ENCODE measurements at regions of chr14 and their contacts with region 1.

Region 1: DNA sequence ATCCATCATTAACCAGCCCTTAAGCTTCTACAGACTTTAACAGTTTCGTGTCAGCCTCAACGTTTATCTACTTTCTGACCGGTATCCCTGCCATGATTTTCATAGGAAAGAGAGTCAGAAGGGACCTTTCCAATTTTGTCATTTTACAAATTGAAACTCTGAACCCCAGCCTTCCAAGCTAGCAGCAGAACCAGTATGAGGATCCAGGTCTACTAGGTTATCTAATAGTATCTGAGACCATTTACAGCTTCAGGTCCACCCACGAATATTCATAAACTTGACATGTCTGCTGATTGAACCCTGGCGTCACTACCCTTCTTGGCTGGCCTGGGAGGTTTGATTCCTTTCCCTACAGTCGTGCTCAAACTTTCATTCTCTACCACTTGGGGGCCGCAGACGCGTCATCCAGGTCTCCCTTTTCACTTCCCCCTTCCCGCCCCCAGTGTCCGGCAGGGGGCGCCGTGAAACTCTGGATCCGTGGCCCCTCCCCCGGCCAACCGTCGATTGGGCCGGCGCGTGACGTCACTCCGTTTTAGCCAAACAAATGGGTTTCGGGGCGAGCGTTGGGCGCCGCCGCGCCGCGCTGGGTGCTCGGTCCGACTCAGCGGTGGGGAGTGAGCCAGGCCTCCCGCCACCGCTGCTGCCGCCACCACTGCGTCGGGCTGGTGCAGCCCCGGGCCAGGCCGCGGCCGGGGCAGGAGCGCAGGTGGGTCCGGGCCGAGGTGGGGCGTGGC is at the start of gene FBXO34:
- DNase-seq: peak; percentile 98
- ATAC-seq: peak; percentile 86
- H3K4me3 Mint-ChIP-seq: peak within 1 kb of the TSS; percentile 90
- H3K27ac Mint-ChIP-seq: peak within 1 kb of the TSS; percentile 94
- H3K4me1 Mint-ChIP-seq: peaks cover 37% of the 10 kb centered on the region
- H3K27me3 Mint-ChIP-seq: no peaks in the 10 kb centered on the region
- total RNA-seq, gene FBXO34: 18.6 to 22.1 TPM

Region 2: GRCh38 chr14:55238019-55238680 is 32.8 kb before region 1 on chr14:
- CTCF ChIA-PET with region 1: no interaction called
- DNase-seq: no peak
- ATAC-seq: no peak
- H3K4me3 Mint-ChIP-seq: no peak overlapping the region
- H3K27ac Mint-ChIP-seq: no peak overlapping the region
- H3K4me1 Mint-ChIP-seq: peaks cover 5% of the 10 kb centered on the region
- H3K27me3 Mint-ChIP-seq: peaks cover 52% of the 10 kb centered on the region

Region 3: GRCh38 chr14:55254581-55254980 is 16.4 kb before region 1 on chr14:
- CTCF ChIA-PET with region 1: interaction called, 10 read pairs
- DNase-seq: no peak
- ATAC-seq: no peak
- H3K4me3 Mint-ChIP-seq: no peak overlapping the region
- H3K27ac Mint-ChIP-seq: no peak overlapping the region
- H3K4me1 Mint-ChIP-seq: no peaks in the 10 kb centered on the region
- H3K27me3 Mint-ChIP-seq: peaks cover 21% of the 10 kb centered on the region

Region 4: DNA sequence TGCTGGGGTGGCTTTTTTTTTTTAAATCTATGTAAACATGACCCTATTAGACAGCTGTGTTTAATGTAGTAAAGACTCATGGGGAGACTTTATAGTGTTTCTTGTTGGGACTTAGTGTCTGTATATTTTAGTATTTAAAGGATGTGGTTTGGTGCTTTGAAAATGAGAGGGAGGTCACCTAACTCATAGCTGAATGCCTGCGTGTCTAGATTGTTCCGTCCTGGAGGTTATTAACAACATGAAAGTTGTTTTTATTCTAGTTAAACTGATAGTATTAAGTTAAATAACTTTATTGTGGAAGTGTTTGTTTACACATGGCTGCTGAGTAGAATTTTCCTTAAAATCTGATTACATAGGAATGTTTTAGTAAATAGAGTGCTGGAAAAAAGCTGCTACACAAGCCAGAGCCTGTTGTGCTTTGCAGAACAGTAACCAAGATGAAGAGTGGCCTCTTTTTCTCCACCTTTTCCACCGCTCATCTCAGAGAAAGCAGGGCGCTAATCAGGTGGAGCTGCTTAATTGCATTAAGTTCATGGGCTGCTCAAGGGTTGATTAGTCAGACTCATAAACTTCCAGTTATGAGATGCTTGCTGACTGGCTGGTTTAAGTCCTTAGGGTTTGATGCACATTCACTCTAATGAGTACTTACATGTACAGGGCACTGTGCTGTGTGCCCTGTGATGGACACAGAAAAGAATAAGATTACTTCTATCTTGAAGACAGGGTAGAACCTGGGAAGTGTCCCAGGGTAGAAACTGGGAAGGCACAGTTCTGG is 62.9 kb after region 1 on chr14:
- CTCF ChIA-PET with region 1: interaction called, 26 read pairs
- DNase-seq: no peak
- ATAC-seq: peak; percentile 37
- H3K4me3 Mint-ChIP-seq: peak overlapping the region; percentile 76
- H3K27ac Mint-ChIP-seq: peak overlapping the region; percentile 91
- H3K4me1 Mint-ChIP-seq: peaks cover 69% of the 10 kb centered on the region
- H3K27me3 Mint-ChIP-seq: no peaks in the 10 kb centered on the region

Region 5: DNA sequence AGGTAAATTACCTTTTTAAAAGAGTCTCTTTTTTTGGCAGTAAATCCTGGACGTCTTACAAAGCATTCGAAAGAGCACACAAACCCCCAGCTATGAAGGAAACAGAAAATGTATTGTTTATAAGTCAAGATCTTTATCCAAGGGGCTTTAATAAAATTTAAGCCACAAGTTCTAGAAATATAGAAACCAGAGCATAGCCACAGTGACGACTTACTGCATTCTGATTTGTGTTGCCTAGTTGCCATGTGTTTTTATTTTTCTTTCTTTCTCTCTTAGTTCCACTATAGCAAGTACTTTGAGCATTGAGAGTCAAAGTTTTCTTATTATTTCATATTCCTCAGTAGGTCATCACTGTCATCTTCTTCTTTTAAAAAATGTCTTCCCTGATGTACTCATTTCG is 217.2 kb after region 1 on chr14:
- CTCF ChIA-PET with region 1: no interaction called
- DNase-seq: no peak
- ATAC-seq: no peak
- H3K4me3 Mint-ChIP-seq: no peak overlapping the region
- H3K27ac Mint-ChIP-seq: no peak overlapping the region
- H3K4me1 Mint-ChIP-seq: no peaks in the 10 kb centered on the region
- H3K27me3 Mint-ChIP-seq: peaks cover 4% of the 10 kb centered on the region